ENCODE measurements at regions of chr1 and their contacts with region 1.

Region 1: GRCh38 chr1:109620841-109621286 is 1.2 kb downstream of the AMPD2 start:
- DNase-seq: peak; percentile 96
- H3K4me3 Mint-ChIP-seq: peak overlapping the region; percentile 95
- H3K27ac Mint-ChIP-seq: peak overlapping the region; percentile 97
- H3K4me1 Mint-ChIP-seq: peaks cover 64% of the 10 kb centered on the region
- H3K27me3 Mint-ChIP-seq: peaks cover 2% of the 10 kb centered on the region

Region 2: DNA sequence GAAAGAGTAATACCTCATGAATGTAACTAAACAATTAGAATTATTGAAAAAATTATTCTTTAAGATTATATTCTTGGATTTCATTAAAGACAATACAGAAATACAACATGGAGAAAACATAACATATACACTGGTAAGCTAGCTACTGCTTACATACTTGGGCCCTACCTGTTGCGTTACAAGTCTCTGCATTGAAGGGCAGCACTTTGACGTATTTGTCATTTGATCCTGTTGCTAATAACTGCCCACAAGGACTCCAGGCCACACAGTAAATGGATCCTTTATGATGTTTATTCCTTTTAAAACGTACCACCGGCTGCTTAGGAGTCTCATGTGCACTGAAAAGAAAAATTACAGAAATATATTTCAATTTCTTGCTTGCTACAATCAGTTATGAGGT is 637.8 kb before region 1 on chr1:
- intact Hi-C with region 1: no loop called
- DNase-seq: no peak
- H3K4me3 Mint-ChIP-seq: no peak overlapping the region
- H3K27ac Mint-ChIP-seq: no peak overlapping the region
- H3K4me1 Mint-ChIP-seq: no peaks in the 10 kb centered on the region
- H3K27me3 Mint-ChIP-seq: no peaks in the 10 kb centered on the region

Region 3: DNA sequence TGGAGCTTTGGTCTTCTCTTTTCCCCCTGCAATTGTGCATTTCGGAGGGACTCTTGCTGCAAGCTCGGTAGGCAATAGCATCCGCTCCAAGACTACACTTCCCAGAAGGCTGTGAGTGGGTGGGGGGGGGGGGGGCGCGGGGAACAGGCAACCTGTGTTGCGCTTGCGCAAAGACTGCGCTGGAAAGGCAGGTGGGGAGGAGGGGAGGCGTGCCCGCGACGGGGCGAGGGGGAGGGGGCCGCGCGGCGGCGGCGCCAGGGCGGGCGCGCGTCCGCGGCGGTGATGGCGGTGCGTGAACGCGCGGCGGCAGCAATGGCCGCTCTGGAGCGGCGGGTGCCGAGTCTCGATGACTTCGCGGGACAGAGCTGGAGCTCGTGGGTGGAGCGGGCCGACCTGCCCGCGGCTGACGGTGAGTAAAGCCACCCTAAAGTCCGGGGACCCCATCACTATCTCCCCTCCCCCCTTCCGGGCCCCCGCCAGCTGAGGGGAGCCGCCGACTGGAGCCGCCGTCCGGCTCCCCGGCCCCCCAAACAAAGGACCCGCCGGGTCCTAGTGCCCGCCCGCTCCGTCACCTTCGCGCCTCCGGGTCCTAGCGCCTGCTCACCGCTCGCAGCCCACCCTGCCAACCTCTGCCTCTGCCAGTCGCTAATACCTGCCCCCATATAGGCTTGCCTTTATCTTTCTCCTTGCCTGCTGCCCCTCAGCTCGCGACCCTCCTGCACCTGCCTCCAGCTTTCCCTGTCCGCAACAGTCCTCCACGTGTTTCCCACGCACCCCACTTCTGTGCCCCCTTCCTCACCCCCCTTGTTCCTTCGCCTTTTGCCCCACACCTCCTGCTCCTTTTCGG is 137.0 kb before region 1 on chr1 and contains the start of gene ATXN7L2:
- intact Hi-C with region 1: loop called (anchors 5 kb)
- DNase-seq: peak; percentile 87
- H3K4me3 Mint-ChIP-seq: peak within 1 kb of the TSS; percentile 95
- H3K27ac Mint-ChIP-seq: peak within 1 kb of the TSS; percentile 96
- H3K4me1 Mint-ChIP-seq: peaks cover 35% of the 10 kb centered on the region
- H3K27me3 Mint-ChIP-seq: peaks cover 13% of the 10 kb centered on the region
- total RNA-seq, gene ATXN7L2: 17.4 and 18.0 TPM in 2 replicates

Region 4: DNA sequence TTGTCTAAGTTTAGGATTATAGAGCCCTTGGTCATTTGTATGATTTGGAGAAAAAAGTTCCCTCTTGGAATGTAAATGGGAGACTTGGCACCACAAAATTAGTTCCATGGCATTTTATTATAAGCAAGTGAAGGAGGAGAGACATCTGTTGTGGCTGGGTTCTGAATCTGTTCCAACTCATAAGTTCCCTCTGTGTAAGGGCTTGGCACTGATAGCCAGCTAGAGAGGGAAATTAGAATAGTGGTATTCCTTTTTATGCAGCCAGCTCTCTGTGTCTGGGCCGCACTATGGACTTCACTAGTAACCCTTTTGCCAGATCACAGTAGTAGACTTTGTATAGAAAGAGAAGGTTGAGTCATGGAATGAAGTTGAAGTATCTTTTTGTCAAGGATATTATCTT is 41.4 kb before region 1 on chr1:
- intact Hi-C with region 1: no loop called
- DNase-seq: no peak
- H3K4me3 Mint-ChIP-seq: no peak overlapping the region
- H3K27ac Mint-ChIP-seq: no peak overlapping the region
- H3K4me1 Mint-ChIP-seq: peaks cover 6% of the 10 kb centered on the region
- H3K27me3 Mint-ChIP-seq: no peaks in the 10 kb centered on the region

Region 5: DNA sequence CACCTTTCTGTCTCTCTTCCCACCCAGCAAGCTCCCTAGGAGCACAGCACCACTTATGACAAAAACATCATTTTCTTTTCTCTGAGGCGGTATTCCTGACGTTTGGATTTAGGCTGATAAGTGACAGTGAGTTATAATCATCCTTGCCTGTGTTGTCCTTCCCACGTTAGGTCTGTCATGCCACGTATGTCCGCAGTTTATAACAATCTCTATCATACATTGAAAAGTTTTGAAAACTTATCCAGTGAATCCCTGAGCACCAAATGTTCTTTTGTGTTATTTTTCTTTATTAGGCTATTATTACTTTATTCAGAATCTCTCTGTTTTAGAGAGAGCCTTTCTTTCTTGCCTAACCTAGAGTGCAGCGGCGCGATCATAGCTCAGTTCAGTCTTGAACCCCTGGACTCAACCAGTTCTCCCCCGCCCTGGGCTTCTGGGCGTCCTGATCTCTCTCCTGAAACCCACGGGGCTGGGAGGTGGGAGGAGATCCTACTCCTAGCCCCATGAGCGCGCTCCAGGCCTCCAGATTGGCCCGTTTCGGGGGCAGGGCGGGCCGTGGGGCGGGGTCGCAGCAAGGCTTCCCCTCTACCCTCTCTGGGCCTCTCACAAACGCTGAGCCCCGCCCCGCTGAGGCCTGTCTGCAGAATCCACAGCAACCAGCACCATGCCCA is 46.7 kb after region 1 on chr1 and contains the start of gene GSTM2:
- intact Hi-C with region 1: loop called (anchors 2 kb)
- DNase-seq: peak; percentile 83
- H3K4me3 Mint-ChIP-seq: peak within 1 kb of the TSS; percentile 73
- H3K27ac Mint-ChIP-seq: no peak within 1 kb of the TSS
- H3K4me1 Mint-ChIP-seq: peaks cover 16% of the 10 kb centered on the region
- H3K27me3 Mint-ChIP-seq: no peaks in the 10 kb centered on the region
- total RNA-seq, gene GSTM2: 19.0 and 19.2 TPM in 2 replicates

Region 6: GRCh38 chr1:109739738-109740660 is 119.1 kb after region 1 on chr1:
- intact Hi-C with region 1: loop called (anchors 1 kb)
- DNase-seq: peak; percentile 79
- H3K4me3 Mint-ChIP-seq: peak overlapping the region; percentile 77
- H3K27ac Mint-ChIP-seq: peak overlapping the region; percentile 47
- H3K4me1 Mint-ChIP-seq: peaks cover 14% of the 10 kb centered on the region
- H3K27me3 Mint-ChIP-seq: peaks cover 27% of the 10 kb centered on the region

Region 7: DNA sequence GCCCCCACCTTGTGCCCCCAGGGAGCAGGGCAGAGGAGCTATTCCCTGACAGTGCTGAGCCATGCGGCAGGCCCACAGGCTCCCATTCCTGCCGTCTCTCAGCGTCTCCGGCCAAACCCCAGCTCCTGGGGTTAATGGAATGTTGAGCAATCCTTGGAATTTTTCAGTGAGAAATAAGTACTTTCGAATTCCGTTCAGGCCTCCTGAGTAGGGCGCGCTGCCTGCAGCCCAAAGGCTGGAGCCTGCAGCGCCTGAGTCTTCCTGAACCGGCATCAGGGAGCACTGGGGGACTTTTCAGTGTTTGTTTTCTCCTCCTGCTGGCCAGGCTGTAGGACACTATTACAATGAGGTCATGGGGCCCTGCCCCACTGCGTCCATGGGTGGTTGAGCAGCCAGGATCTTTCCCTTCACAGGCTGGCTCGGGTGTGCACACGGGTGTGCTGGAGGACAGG is 256.5 kb after region 1 on chr1:
- intact Hi-C with region 1: no loop called
- DNase-seq: no peak
- H3K4me3 Mint-ChIP-seq: no peak overlapping the region
- H3K27ac Mint-ChIP-seq: no peak overlapping the region
- H3K4me1 Mint-ChIP-seq: peaks cover 12% of the 10 kb centered on the region
- H3K27me3 Mint-ChIP-seq: peaks cover 10% of the 10 kb centered on the region

Region 8: DNA sequence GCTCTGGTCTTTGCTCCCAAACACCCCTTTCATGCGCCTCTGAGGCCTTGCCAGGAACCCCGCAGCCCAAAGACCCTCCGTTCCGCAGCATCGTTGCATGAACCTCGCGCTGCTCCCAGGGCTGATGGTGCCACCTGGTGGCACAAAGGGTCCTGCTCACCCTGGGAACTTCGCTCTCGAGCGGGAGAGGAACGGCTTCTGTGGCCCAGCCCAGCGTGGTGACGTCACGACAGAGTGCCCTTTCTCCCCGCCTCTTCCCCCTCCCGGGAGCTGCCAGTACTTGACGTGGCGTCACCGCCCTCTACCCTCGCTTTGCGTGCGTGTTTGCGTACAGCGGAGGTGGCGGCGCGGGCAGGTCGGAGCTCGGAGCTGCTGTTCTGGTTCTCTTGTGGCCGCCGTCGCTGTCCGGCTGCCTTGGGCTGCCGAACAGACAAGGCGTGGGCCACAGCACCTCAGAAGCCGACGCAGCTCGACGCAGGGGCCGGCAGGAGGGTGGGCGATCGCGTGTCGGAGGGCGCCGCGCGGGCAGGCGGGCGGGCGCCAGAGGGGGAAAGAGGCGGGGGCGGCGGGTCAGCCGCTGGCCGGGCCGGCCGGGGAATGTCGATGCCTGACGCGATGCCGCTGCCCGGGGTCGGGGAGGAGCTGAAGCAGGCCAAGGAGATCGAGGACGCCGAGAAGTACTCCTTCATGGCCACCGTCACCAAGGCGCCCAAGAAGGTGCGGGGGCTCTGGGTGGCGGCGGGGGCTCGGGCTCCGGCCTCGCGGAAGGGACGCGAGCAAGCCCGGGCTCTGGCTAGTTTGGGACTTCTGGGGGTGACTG is 363.8 kb after region 1 on chr1 and contains the start of gene AHCYL1:
- intact Hi-C with region 1: loop called (anchors 1 kb)
- DNase-seq: peak; percentile 99
- H3K4me3 Mint-ChIP-seq: peak within 1 kb of the TSS; percentile 93
- H3K27ac Mint-ChIP-seq: peak within 1 kb of the TSS; percentile 97
- H3K4me1 Mint-ChIP-seq: peaks cover 36% of the 10 kb centered on the region
- H3K27me3 Mint-ChIP-seq: peaks cover 4% of the 10 kb centered on the region
- total RNA-seq, gene AHCYL1: 63.8 and 64.1 TPM in 2 replicates

Region 9: GRCh38 chr1:110407260-110408210 is 786.7 kb after region 1 on chr1 and contains the start of gene LAMTOR5:
- intact Hi-C with region 1: loop called (anchors 2 kb)
- DNase-seq: peak; percentile 90
- H3K4me3 Mint-ChIP-seq: peak within 1 kb of the TSS; percentile 100
- H3K27ac Mint-ChIP-seq: peak within 1 kb of the TSS; percentile 100
- H3K4me1 Mint-ChIP-seq: peaks cover 22% of the 10 kb centered on the region
- H3K27me3 Mint-ChIP-seq: no peaks in the 10 kb centered on the region
- total RNA-seq, gene LAMTOR5: 163 and 184 TPM in 2 replicates